ENCODE measurements at regions of chr14 and their contacts with region 1.

Region 1: GRCh38 chr14:68795597-68796417 is 2.9 kb upstream of the ZFP36L1 start:
- DNase-seq: peak; percentile 75
- H3K4me3 ChIP-seq: peak overlapping the region; percentile 59 to 72 (median 72)
- H3K27ac ChIP-seq: peak overlapping the region; percentile 98
- H3K4me1 ChIP-seq: peaks cover 14% of the 10 kb centered on the region
- H3K27me3 ChIP-seq: no peaks in the 10 kb centered on the region
- CTCF ChIP-seq: peak; percentile 42 to 68
- POLR2A ChIP-seq: peak; percentile 1

Region 2: GRCh38 chr14:68359837-68360552 is 435.8 kb before region 1 on chr14:
- CTCF ChIA-PET with region 1: no interaction called
- POLR2A ChIA-PET with region 1: interaction called, 4 read pairs
- dilution Hi-C with region 1: no loop called
- intact Hi-C with region 1: loop called (anchors 2 kb)
- DNase-seq: no peak
- H3K4me3 ChIP-seq: no peak overlapping the region
- H3K27ac ChIP-seq: no peak overlapping the region
- H3K4me1 ChIP-seq: peaks cover 21% of the 10 kb centered on the region
- H3K27me3 ChIP-seq: no peaks in the 10 kb centered on the region
- CTCF ChIP-seq: no peak
- POLR2A ChIP-seq: no peak

Region 3: GRCh38 chr14:68458840-68459469 is 336.9 kb before region 1 on chr14:
- CTCF ChIA-PET with region 1: interaction called, 5 read pairs
- POLR2A ChIA-PET with region 1: interaction called, 17 read pairs
- dilution Hi-C with region 1: no loop called
- intact Hi-C with region 1: loop called (anchors 1 kb)
- DNase-seq: peak; percentile 98
- H3K4me3 ChIP-seq: no peak overlapping the region
- H3K27ac ChIP-seq: peak overlapping the region; percentile 85
- H3K4me1 ChIP-seq: peaks cover 30% of the 10 kb centered on the region
- H3K27me3 ChIP-seq: no peaks in the 10 kb centered on the region
- CTCF ChIP-seq: no peak
- POLR2A ChIP-seq: peak; percentile 23

Region 4: GRCh38 chr14:68589447-68590220 is 206.2 kb before region 1 on chr14:
- CTCF ChIA-PET with region 1: no interaction called
- POLR2A ChIA-PET with region 1: interaction called, 11 read pairs
- dilution Hi-C with region 1: no loop called
- intact Hi-C with region 1: no loop called
- DNase-seq: no peak
- H3K4me3 ChIP-seq: no peak overlapping the region
- H3K27ac ChIP-seq: no peak overlapping the region
- H3K4me1 ChIP-seq: peaks cover 6% of the 10 kb centered on the region
- H3K27me3 ChIP-seq: no peaks in the 10 kb centered on the region
- CTCF ChIP-seq: no peak
- POLR2A ChIP-seq: no peak

Region 5: GRCh38 chr14:68637106-68638021 is 158.4 kb before region 1 on chr14:
- CTCF ChIA-PET with region 1: no interaction called
- POLR2A ChIA-PET with region 1: no interaction called
- dilution Hi-C with region 1: no loop called
- intact Hi-C with region 1: no loop called
- DNase-seq: no peak
- H3K4me3 ChIP-seq: no peak overlapping the region
- H3K27ac ChIP-seq: no peak overlapping the region
- H3K4me1 ChIP-seq: peaks cover 7% of the 10 kb centered on the region
- H3K27me3 ChIP-seq: no peaks in the 10 kb centered on the region
- CTCF ChIP-seq: no peak
- POLR2A ChIP-seq: no peak

Region 6: GRCh38 chr14:68695326-68695768 is 100.5 kb before region 1 on chr14:
- CTCF ChIA-PET with region 1: no interaction called
- POLR2A ChIA-PET with region 1: interaction called, 10 read pairs
- dilution Hi-C with region 1: no loop called
- intact Hi-C with region 1: loop called (anchors 1 kb)
- DNase-seq: peak; percentile 96
- H3K4me3 ChIP-seq: no peak overlapping the region
- H3K27ac ChIP-seq: peak overlapping the region; percentile 80
- H3K4me1 ChIP-seq: peaks cover 26% of the 10 kb centered on the region
- H3K27me3 ChIP-seq: no peaks in the 10 kb centered on the region
- CTCF ChIP-seq: no peak
- POLR2A ChIP-seq: peak; percentile 29

Region 7: GRCh38 chr14:68780358-68781160 is 15.2 kb before region 1 on chr14:
- CTCF ChIA-PET with region 1: no interaction called
- POLR2A ChIA-PET with region 1: interaction called, 14 read pairs
- dilution Hi-C with region 1: no loop called
- intact Hi-C with region 1: no loop called
- DNase-seq: peak; percentile 57
- H3K4me3 ChIP-seq: no peak overlapping the region
- H3K27ac ChIP-seq: peak overlapping the region; percentile 51
- H3K4me1 ChIP-seq: peaks cover 43% of the 10 kb centered on the region
- H3K27me3 ChIP-seq: no peaks in the 10 kb centered on the region
- CTCF ChIP-seq: no peak
- POLR2A ChIP-seq: no peak

Region 8: DNA sequence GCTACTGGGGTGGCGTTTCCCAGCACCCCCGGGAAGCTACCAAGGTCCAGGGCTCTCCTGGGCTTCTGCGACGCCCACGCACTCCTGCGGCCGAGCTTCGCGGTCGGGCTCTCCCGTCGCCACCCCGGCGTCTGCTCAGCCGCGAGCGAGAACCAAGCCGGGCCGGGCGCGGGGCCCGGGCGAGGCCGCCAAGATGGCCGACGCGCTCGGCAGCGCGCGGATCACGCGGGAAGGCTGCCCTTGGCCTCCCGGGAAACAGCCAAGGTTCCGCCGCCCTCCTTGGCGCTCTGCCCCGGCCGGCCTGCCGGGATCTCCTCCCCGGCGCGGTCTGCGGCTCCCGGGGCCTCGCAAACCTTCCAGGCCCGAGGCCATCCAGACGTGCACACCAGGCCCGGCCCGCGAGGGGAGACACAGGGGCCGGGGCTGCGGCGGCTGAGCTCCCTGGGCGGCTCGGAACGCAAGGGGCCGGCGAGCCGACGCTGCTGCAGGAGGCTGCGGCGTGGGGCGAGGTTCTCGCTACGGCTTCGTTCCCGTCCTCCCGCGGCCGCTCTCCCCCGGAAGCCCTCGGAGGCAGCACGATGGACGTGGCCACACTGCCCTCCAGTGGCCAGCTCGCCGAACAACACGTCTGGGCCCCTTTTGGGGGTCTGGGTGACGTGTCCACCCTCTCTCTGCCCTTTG is 20.6 kb after region 1 on chr14:
- CTCF ChIA-PET with region 1: interaction called, 41 read pairs
- POLR2A ChIA-PET with region 1: interaction called, 75 read pairs
- dilution Hi-C with region 1: no loop called
- intact Hi-C with region 1: loop called (anchors 1 kb)
- DNase-seq: peak; percentile 89
- H3K4me3 ChIP-seq: peak overlapping the region in 1 of 3 experiments; percentile 24
- H3K27ac ChIP-seq: peak overlapping the region; percentile 71
- H3K4me1 ChIP-seq: peaks cover 21% of the 10 kb centered on the region
- H3K27me3 ChIP-seq: no peaks in the 10 kb centered on the region
- CTCF ChIP-seq: peak; percentile 95
- POLR2A ChIP-seq: peak; percentile 46

Region 9: DNA sequence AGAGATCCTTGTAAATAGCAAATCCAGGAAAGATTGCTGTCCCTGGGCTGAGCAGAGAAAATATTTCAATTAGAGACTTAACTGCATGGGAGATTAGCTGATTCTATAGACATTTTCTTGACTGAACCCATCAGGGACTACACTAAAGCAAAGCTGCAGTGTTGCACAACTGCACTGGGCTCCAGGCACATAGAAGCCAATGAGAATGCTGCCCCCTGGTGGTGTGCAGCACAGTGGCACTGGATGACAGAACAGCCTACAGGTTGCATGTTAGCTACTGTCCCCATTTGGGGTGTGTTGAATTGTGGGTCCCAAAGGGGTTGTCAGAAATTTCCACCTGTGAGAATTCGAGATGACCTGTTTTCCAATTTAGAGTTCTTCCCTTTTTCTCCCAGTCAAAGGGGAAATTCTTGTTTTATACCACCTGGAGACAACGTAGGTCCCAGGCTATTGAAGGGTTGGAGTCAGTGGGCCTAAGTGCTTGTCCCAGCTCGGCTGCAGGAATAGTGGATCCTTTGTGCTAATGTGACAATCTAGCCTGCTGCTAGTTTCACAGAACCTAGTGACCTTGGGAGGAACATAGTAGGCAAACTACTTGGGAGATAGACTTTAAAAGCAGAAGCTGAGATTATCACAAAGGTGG is 1278.2 kb after region 1 on chr14:
- CTCF ChIA-PET with region 1: no interaction called
- POLR2A ChIA-PET with region 1: no interaction called
- dilution Hi-C with region 1: no loop called
- intact Hi-C with region 1: no loop called
- DNase-seq: peak; percentile 35
- H3K4me3 ChIP-seq: no peak overlapping the region
- H3K27ac ChIP-seq: no peak overlapping the region
- H3K4me1 ChIP-seq: no peaks in the 10 kb centered on the region
- H3K27me3 ChIP-seq: no peaks in the 10 kb centered on the region
- CTCF ChIP-seq: peak; percentile 71 to 83
- POLR2A ChIP-seq: no peak